Right cardiac atrium (tissue), 5 donors: ENCODE measurements at regions of chr5 and their contacts with region 1.

Region 1: GRCh38 chr5:173331956-173332479 is 3.8 kb upstream of the STC2 start:
- DNase-seq: peak; percentile 89 to 96 (median 94)
- ATAC-seq: peak; percentile 82 to 83
- H3K4me3 ChIP-seq: no peak overlapping the region
- H3K27ac ChIP-seq: no peak overlapping the region
- H3K4me1 ChIP-seq: peaks cover 3% of the 10 kb centered on the region
- H3K27me3 ChIP-seq: no peaks in the 10 kb centered on the region

Region 2: GRCh38 chr5:173217626-173218397 is 114.2 kb before region 1 on chr5:
- intact Hi-C with region 1: no loop called
- DNase-seq: no peak
- ATAC-seq: peak in 1 of 2 donors; percentile 40
- H3K4me3 ChIP-seq: no peak overlapping the region
- H3K27ac ChIP-seq: no peak overlapping the region
- H3K4me1 ChIP-seq: no peaks in the 10 kb centered on the region
- H3K27me3 ChIP-seq: no peaks in the 10 kb centered on the region

Region 3: GRCh38 chr5:173293817-173294672 is 38.0 kb before region 1 on chr5:
- intact Hi-C with region 1: loop called (anchors 2 kb)
- DNase-seq: peak; percentile 75 to 89 (median 87)
- ATAC-seq: peak; percentile 60 to 62
- H3K4me3 ChIP-seq: no peak overlapping the region
- H3K27ac ChIP-seq: no peak overlapping the region
- H3K4me1 ChIP-seq: no peaks in the 10 kb centered on the region
- H3K27me3 ChIP-seq: no peaks in the 10 kb centered on the region

Region 4: DNA sequence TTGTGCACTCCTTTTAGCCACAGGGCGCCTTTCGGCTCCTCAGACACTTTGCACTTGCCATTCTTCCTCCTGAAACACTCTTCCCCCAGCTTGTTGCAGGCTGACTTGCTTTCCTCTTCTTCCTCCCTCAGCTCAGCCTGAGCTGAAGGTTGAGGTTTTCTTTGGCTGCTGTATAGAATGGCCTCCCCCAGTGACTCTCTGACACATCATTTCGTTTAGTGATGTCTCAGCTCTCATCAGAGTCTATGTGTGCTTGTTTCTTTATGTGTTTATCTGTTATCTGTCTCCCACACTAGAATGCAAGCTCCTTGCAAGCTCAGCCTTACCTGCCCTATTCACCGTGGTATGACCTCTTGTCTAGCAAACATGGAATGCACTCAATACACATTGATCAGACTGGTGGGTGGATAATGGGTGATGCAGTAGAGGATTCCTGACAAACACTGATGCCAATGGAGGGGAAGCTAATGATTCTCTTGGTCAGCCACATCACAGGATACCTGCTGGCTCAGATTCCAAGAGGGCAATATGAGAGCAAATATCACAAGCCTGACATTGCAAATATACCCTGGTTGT is 109.1 kb after region 1 on chr5:
- intact Hi-C with region 1: loop called in 1 of 4 experiments (anchors 10 kb)
- DNase-seq: no peak
- ATAC-seq: no peak
- H3K4me3 ChIP-seq: no peak overlapping the region
- H3K27ac ChIP-seq: no peak overlapping the region
- H3K4me1 ChIP-seq: no peaks in the 10 kb centered on the region
- H3K27me3 ChIP-seq: no peaks in the 10 kb centered on the region